Activated CD4-positive, alpha-beta T cell treated with anti-CD3 and anti-CD28 coated beads, Interleukin-2, amount 10 ng/mL, durations not matched to agents 7 days and 5 days (primary cell): ENCODE measurements at regions of chr7 and their contacts with region 1.

Region 1: GRCh38 chr7:27745064-27745583 is 5.2 kb downstream of the TAX1BP1 start:
- DNase-seq: no peak
- H3K4me3 Mint-ChIP-seq: no peak overlapping the region
- H3K27ac Mint-ChIP-seq: no peak overlapping the region
- H3K4me1 Mint-ChIP-seq: peaks cover 28% of the 10 kb centered on the region
- H3K27me3 Mint-ChIP-seq: no peaks in the 10 kb centered on the region

Region 2: DNA sequence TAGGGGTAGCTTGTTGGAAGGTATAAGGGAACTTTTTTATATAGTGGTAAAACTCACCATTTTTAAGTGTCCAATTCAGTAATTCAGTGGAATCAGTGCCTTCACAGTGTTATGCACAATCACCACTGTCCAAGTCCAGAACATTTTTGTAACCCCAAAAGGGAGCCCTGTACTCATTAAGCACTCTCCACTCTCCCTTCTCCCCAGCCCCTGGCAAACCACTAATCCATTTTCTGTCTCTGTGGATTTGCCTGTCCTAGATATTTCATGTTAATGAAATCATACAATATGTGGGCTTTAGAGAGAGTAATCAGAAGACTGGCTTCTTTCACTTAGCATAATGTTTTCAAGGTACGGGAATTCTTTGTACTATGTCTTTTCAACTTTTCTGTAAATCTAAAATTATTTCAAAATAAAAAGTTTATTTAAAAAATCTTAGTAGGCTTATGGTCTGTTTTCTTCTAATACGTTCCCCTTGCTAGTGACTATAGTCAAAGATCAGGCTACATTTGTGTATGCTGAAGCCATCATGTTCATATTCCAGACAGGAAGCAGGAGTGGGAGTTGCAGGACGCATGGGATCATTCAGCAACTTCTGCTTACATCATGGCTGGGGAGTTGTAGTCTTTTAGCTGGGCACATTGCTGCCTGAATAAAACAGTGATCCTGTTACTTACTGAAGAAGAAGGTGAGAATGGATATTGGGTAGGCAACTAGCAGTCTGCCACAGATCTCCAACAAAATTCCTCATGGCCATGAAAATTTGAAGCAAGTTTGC is 40.5 kb before region 1 on chr7:
- CTCF ChIA-PET with region 1: no interaction called
- POLR2A ChIA-PET with region 1: no interaction called
- DNase-seq: no peak
- H3K4me3 Mint-ChIP-seq: no peak overlapping the region
- H3K27ac Mint-ChIP-seq: no peak overlapping the region
- H3K4me1 Mint-ChIP-seq: no peaks in the 10 kb centered on the region
- H3K27me3 Mint-ChIP-seq: peaks cover 18% of the 10 kb centered on the region

Region 3: GRCh38 chr7:28144266-28144665 is 399.1 kb after region 1 on chr7:
- CTCF ChIA-PET with region 1: no interaction called
- POLR2A ChIA-PET with region 1: interaction called, 10 read pairs
- DNase-seq: no peak
- H3K4me3 Mint-ChIP-seq: no peak overlapping the region
- H3K27ac Mint-ChIP-seq: no peak overlapping the region
- H3K4me1 Mint-ChIP-seq: no peaks in the 10 kb centered on the region
- H3K27me3 Mint-ChIP-seq: no peaks in the 10 kb centered on the region